ENCODE measurements at regions of chr18 and their contacts with region 1.

Region 1: DNA sequence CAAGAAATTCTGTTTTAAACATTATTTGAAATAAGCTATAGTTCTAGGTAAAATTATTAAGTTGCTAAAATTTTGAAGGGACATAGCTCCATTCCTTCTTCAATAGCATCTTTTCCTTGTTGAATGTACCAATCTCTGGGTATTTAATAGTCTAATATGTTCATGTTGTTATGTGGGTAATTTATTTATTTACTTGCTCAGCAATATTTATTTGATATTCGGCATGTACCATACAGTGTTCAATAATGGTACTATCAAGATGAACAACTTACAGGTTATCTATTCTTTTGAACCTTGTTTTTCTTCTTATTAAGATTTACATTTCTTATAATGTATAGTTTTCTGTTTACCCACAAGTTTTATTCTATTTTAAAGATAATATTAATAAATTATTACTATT is 1616.8 kb upstream of the PIK3C3 start:
- DNase-seq: no peak
- H3K4me3 ChIP-seq: no peak overlapping the region
- H3K27ac ChIP-seq: no peak overlapping the region
- H3K4me1 ChIP-seq: no peaks in the 10 kb centered on the region
- H3K27me3 ChIP-seq: no peaks in the 10 kb centered on the region
- CTCF ChIP-seq: no peak
- POLR2A ChIP-seq: no peak

Region 2: GRCh38 chr18:40437517-40437916 is 99.2 kb after region 1 on chr18:
- intact Hi-C with region 1: no loop called
- DNase-seq: no peak
- H3K4me3 ChIP-seq: no peak overlapping the region
- H3K27ac ChIP-seq: no peak overlapping the region
- H3K4me1 ChIP-seq: no peaks in the 10 kb centered on the region
- H3K27me3 ChIP-seq: no peaks in the 10 kb centered on the region
- CTCF ChIP-seq: no peak
- POLR2A ChIP-seq: no peak

Region 3: GRCh38 chr18:40995529-40995928 is 657.2 kb after region 1 on chr18:
- intact Hi-C with region 1: loop called (anchors 5 kb)
- DNase-seq: no peak
- H3K4me3 ChIP-seq: no peak overlapping the region
- H3K27ac ChIP-seq: no peak overlapping the region
- H3K4me1 ChIP-seq: no peaks in the 10 kb centered on the region
- H3K27me3 ChIP-seq: no peaks in the 10 kb centered on the region
- CTCF ChIP-seq: no peak
- POLR2A ChIP-seq: no peak